ENCODE measurements at regions of chr19 and their contacts with region 1.

Region 1: DNA sequence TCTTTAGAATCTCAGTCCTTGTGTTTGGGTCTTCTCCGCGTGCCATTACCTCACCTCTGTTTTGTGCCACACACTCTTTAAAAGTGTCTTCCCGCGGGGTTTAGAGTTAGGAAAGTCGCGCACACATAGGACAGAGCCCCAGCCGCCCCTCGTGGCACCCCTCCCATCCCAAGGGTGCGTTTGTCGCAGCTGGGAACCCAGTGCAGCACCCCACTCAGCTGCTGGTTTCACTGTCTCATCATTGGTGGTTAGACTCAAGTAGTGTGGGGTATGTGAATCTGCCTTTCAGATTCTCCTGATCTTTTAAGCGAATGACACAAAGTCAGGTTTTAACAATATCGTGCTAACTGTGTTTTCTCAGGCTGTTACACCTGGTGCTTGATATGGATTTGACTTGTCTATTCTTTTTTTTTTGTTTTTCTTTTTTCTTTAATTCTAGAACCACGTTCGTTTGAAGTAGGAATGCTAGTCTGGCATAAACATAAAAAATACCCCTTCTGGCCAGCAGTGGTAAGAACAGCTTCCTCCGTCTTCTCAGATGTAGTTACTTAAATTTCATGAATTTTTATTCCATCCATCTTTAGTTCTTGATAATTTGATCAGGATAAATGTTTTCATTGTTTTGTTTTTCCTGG is 19.5 kb upstream of the NDUFS7 start:
- DNase-seq: peak; percentile 42
- ATAC-seq: peak; percentile 82
- H3K4me3 Mint-ChIP-seq: peak overlapping the region; percentile 69
- H3K27ac Mint-ChIP-seq: peak overlapping the region; percentile 87
- H3K4me1 Mint-ChIP-seq: peaks cover 33% of the 10 kb centered on the region
- H3K27me3 Mint-ChIP-seq: no peaks in the 10 kb centered on the region

Region 2: GRCh38 chr19:1315470-1316231 is 48.5 kb before region 1 on chr19:
- CTCF ChIA-PET with region 1: interaction called, 11 read pairs
- POLR2A ChIA-PET with region 1: no interaction called
- DNase-seq: peak; percentile 47
- ATAC-seq: peak; percentile 75
- H3K4me3 Mint-ChIP-seq: no peak overlapping the region
- H3K27ac Mint-ChIP-seq: no peak overlapping the region
- H3K4me1 Mint-ChIP-seq: no peaks in the 10 kb centered on the region
- H3K27me3 Mint-ChIP-seq: peaks cover 19% of the 10 kb centered on the region

Region 3: GRCh38 chr19:1351381-1351851 is 12.8 kb before region 1 on chr19:
- CTCF ChIA-PET with region 1: no interaction called
- POLR2A ChIA-PET with region 1: no interaction called
- DNase-seq: no peak
- ATAC-seq: no peak
- H3K4me3 Mint-ChIP-seq: no peak overlapping the region
- H3K27ac Mint-ChIP-seq: no peak overlapping the region
- H3K4me1 Mint-ChIP-seq: peaks cover 13% of the 10 kb centered on the region
- H3K27me3 Mint-ChIP-seq: peaks cover 8% of the 10 kb centered on the region

Region 4: GRCh38 chr19:1490311-1491113 is 126.3 kb after region 1 on chr19 and contains the start of gene PCSK4:
- CTCF ChIA-PET with region 1: no interaction called
- POLR2A ChIA-PET with region 1: no interaction called
- DNase-seq: peak; percentile 98
- ATAC-seq: peak; percentile 88
- H3K4me3 Mint-ChIP-seq: peak within 1 kb of the TSS; percentile 75
- H3K27ac Mint-ChIP-seq: peak within 1 kb of the TSS; percentile 79
- H3K4me1 Mint-ChIP-seq: peaks cover 13% of the 10 kb centered on the region
- H3K27me3 Mint-ChIP-seq: peaks cover 5% of the 10 kb centered on the region
- total RNA-seq, gene PCSK4: 3.4 to 4.1 TPM